GM10248 (cell line): ENCODE measurements at regions of chr18 and their contacts with region 1.

Region 1: DNA sequence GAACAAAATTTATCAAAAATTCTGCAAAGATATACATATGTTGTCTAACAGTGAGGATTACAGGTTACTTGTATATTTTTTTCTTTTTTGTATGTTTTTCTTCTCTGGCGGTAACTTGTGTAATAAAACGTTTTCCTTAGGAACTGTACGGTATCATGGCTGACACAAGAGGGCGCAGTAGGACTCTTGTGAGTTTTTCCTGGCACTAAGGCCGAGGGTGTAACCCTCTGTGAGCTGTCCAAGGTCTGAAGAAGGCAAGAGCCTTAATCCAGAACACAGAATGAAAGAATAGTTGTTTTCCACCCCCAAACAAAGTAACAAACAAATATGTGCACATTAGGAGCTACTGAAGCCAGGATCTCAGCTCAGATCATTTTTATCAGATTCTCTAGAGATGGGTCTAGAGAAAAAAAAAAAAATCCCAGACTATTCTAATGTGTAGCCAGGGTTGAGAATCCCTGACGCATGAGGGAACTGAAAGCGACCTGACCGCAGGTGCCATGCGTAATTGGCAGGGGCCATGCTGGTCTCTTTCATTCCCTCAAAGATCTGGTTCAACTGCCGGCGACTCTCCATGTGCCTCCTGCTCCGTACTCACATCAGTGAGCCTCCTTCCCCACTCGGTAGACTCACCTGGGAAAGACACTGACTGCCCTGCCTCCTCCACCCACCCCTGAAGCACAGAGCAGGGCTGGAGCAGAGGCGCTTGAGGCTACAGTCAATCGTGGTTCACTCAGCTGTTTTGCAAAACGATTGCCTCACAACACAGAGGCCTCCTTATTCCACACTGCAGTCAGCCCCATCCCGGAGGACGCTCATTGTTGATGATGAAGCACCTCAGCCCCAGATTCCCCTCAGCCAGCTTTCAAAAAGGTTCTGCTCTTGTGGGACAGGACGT is 26.9 kb downstream of the TMEM200C start:
- DNase-seq: peak; percentile 45
- CTCF ChIP-seq: peak; percentile 80

Region 2: DNA sequence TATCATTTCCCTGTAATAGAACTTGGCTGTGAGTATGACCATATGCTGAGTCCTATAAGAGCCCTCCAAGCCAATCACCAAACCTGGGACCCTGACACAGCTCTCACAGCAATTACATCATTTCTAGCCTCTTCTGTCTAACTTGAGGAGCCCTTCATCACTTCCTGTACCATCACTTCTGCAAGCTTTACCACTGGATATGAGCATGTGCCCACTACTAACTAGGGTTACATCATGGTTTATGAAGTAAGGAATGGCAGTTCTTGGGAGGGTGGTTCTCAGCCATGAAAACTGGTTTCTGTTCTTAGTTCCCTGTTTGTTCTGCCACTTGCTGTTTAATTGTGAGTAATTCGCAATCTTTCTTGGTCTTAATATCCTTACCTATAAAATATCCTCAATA is 293.6 kb before region 1 on chr18:
- CTCF ChIA-PET with region 1: no interaction called
- POLR2A ChIA-PET with region 1: no interaction called
- DNase-seq: no peak
- CTCF ChIP-seq: no peak

Region 3: DNA sequence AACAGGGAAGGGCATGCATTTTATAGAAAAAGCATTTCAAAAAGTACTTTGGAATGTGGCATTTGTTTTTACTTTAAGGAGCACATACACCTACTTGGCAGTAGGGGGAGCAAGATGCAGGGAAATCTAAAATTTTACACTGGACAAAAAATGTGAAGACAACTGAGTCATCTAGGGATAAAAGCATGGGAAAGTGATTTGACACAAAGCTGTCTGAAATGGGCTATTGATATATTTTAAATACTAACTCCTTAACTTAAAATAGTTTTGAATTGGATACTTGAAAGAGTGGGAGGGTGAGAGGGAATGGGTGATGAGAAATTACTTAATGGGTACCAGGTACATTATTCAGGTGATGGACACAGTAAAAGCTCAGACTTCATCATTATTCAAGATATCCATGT is 11.0 kb after region 1 on chr18:
- CTCF ChIA-PET with region 1: interaction called, 15 read pairs
- POLR2A ChIA-PET with region 1: no interaction called
- DNase-seq: no peak
- CTCF ChIP-seq: peak; percentile 65

Region 4: GRCh38 chr18:5941890-5942289 is 73.4 kb after region 1 on chr18:
- CTCF ChIA-PET with region 1: no interaction called
- POLR2A ChIA-PET with region 1: no interaction called
- DNase-seq: no peak
- CTCF ChIP-seq: no peak